Left cardiac atrium (tissue), 4 donors: ENCODE measurements at regions of chr7 and their contacts with region 1.

Region 1: DNA sequence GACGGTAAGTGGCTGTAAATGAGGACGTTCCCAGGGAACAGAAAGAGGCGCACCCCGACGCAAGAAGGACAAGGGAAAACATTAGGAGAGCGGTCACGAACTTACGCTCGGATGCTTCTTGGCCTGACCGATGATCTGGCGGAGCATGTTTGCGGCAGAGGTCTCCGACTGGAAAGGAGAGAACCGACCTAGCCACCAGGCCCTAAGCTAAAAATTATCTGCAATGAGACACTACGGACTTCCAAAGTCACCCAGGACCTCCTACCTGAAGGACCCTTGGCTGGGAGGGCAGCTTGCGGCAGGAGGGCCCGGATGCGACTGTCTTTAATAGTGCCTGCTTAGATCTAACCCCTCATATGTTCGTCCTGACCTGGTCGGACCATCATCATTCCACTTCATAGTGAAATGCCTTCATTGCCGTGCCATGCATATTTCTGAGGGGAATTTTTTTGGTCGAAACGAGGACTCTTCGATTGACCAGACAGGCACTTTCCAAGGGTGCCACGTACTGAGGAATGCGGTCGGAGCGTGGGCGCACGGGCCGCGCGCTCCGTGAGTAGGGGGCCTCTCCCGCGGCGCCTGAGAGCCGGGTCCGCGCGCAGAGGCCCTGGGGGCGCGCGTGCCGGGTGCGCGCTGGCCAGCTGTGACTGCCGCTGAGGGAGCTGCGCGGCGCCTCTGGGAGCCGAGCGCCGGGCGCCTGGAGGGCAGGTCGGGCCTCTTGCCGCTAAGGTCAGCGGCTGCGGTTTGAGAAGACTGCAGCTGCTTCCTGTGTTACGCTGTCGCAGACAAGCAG is 33.6 kb upstream of the PHF14 start:
- DNase-seq: peak; percentile 92
- ATAC-seq: peak; percentile 99

Region 2: DNA sequence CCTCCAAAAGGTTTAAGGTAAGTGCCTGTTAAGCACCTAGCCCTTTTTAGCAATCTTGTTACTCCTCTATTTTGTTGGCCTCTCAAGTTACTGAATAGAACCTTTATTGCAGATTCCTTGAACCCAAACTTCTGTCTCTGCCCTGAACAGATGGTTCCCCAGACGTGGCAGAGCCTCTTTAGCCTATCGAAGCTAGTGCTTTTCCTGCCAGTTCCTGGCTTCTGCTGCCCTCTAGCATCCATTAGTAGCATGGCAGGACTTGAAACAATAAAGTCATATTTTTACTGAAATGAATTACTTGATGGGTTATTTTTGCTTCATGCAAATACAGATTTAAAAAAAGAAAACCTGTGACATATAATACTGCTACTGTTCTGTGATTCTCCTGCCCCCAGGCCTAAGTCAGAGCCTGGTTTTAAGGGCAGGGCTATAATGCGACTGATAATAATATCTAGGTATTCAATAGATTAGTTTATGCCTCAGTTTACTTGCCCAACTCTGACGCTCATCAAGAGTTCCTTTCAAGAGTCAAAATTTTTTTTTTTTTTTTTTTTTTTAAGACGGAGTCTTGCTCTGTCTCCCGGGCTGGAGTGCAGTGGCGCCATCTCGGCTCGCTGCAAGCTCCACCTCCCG is 50.7 kb before region 1 on chr7:
- intact Hi-C with region 1: no loop called
- DNase-seq: peak; percentile 33
- ATAC-seq: peak; percentile 67 to 70

Region 3: DNA sequence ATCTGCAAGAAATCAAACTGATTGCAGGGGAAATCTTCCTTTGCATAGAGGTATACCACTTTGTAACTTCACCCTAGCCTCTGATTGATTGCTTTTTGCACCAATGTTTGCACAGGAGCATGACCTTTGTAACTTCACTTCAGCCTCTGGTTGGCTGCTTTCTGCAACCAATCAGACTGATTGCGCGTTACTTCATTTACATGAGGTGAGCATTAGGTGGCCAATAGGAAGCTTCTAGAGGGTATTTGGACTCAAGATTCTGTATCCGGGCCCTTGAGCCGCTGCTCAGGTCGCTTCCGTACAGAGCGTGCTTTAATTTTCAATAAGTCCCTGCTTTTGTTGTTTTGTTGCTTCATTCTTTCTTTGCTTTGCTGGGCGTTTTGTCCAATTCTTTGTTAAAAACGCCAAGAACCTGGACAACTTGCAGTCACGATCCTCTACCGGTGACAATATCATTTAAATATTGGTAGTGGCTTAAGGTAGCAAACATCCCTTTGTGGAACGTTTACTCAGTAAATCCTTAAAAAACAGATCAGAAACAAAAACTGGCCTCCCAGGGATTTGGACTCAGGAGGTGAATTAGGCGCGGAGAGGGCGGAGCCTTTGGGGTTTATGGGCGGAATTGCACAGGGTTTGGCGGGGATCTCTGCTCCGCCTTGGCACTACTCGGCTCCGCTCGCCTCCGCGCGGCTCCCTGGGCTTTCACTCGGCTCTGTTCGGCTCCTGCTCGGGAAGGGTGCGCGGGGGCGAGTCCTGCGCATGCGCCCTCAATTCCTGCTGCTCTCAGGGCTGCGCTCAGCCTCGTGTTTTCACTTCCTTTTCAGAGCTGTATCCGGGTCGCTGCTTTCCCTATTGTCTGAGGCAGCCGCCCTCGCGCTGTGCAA is 33.2 kb after region 1 on chr7 and contains the start of gene PHF14:
- intact Hi-C with region 1: loop called in 1 of 2 experiments (anchors 2 kb)
- DNase-seq: peak; percentile 98
- ATAC-seq: peak; percentile 100
- total RNA-seq, gene PHF14: 14.5 to 17.2 TPM